Transverse colon (tissue), 4 donors: ENCODE measurements at regions of chr3 and their contacts with region 1.

Region 1: DNA sequence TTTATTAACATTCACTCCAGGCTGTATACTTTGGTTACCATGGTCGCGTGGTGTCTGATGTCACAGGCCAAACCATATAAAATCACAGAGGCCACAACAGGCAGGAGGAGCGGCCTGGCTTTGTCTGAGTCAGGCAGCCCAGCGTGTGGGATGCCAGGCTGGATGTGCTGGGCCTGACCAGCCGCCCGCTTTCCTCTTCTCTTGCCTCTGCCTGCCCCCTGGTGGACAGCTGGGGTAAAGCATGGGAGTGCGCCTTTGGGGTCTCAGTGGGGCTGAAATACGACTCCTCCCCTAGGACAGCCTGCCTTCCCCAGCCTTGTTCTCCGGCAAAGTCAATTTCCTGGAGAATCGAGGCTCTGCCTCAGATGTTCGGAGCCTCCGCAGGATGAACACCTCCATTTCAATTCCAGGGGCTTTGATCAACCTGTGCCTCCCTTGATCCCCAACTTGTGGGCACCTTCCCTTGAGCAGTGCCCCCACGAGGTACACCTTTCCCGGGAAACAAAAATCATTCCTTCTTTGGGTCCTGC is 78.2 kb downstream of the CCNL1 start:
- DNase-seq: peak; percentile 90
- H3K4me3 ChIP-seq: no peak overlapping the region
- H3K27ac ChIP-seq: peak overlapping the region; percentile 29 to 47 (median 41)
- H3K4me1 ChIP-seq: peaks cover 1 to 13% (median 8%) of the 10 kb centered on the region in 4 donors
- H3K27me3 ChIP-seq: no peaks in the 10 kb centered on the region
- CTCF ChIP-seq: peak; percentile 96 to 99 (median 99)
- EP300 ChIP-seq: no peak
- POLR2A ChIP-seq: no peak

Region 2: GRCh38 chr3:156535162-156535627 is 546.6 kb before region 1 on chr3:
- in situ Hi-C with region 1: loop called in 1 of 4 experiments (anchors 10 kb)
- intact Hi-C with region 1: loop called (anchors 10 kb)
- DNase-seq: peak; percentile 51
- H3K4me3 ChIP-seq: no peak overlapping the region
- H3K27ac ChIP-seq: peak overlapping the region; percentile 69 to 76 (median 74)
- H3K4me1 ChIP-seq: peaks cover 8 to 17% (median 15%) of the 10 kb centered on the region in 4 donors
- H3K27me3 ChIP-seq: no peaks in the 10 kb centered on the region
- CTCF ChIP-seq: peak in 1 of 5 experiments; percentile 28
- EP300 ChIP-seq: no peak
- POLR2A ChIP-seq: peak; percentile 10

Region 3: DNA sequence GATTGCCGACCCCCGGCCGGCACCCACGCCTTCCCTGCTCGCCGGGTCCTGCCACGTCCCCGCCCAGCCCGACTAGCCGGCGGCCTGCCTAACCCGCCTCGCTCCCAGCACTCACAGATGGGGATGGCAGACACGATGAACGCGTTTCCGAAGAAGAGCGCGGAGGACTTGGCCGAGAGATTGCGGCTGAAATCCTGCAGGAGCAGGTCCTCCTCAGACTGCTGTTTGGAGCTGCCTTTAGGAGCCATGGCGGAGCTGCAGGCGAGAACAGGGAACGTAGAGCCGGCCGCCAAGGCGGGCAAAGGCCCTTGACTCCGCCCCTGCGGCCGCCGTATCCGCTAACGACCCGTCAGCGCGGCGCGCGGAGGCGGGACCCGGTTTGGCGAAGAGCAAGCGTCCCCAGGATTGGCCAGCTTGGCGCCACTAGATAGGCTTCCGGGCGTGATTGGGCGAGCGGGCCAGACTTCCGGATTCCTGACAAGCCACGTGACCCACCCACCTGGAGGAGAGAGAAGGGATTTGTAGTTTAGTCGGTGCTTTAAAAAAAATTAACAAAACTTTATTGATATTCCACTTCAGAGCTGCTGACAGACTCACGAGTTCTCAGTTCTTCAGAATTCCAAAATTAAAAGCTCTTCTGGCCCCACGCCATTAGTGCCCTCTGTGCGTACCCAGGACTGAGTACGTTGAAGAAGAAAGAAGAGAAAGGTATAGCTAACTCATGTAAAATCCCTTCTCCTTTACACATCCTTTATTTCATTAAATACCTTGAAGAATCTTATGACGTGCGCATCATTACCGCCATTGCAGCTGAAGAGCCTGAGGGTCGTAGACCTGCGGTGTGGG is 526.7 kb before region 1 on chr3 and contains the start of gene SSR3:
- in situ Hi-C with region 1: loop called in 3 of 4 experiments (anchors 10 to 25 kb)
- intact Hi-C with region 1: no loop called
- DNase-seq: peak; percentile 99
- H3K4me3 ChIP-seq: peak within 1 kb of the TSS; percentile 69 to 95 (median 76)
- H3K27ac ChIP-seq: peak within 1 kb of the TSS; percentile 89 to 97 (median 90)
- H3K4me1 ChIP-seq: peaks cover 8 to 43% (median 25%) of the 10 kb centered on the region in 4 donors
- H3K27me3 ChIP-seq: no peaks in the 10 kb centered on the region
- CTCF ChIP-seq: peak; percentile 37 to 92 (median 45)
- EP300 ChIP-seq: no peak
- POLR2A ChIP-seq: peak; percentile 91
- total RNA-seq, gene SSR3: 21.7 to 68.8 (median 50.1) TPM

Region 4: GRCh38 chr3:156681002-156681401 is 400.7 kb before region 1 on chr3:
- in situ Hi-C with region 1: loop called (anchors 5 to 10 kb)
- intact Hi-C with region 1: loop called (anchors 5 kb)
- DNase-seq: peak; percentile 28
- H3K4me3 ChIP-seq: peak overlapping the region in 1 of 4 donors; percentile 4
- H3K27ac ChIP-seq: peak overlapping the region; percentile 16 to 34 (median 26)
- H3K4me1 ChIP-seq: peaks cover 46 to 94% (median 49%) of the 10 kb centered on the region in 4 donors
- H3K27me3 ChIP-seq: no peaks in the 10 kb centered on the region
- CTCF ChIP-seq: no peak
- EP300 ChIP-seq: no peak
- POLR2A ChIP-seq: no peak

Region 5: GRCh38 chr3:156826144-156826895 is 255.4 kb before region 1 on chr3 and contains the start of gene LEKR1:
- in situ Hi-C with region 1: loop called in 2 of 4 experiments (anchors 10 to 25 kb)
- intact Hi-C with region 1: loop called (anchors 10 kb)
- DNase-seq: peak; percentile 92
- H3K4me3 ChIP-seq: peak within 1 kb of the TSS; percentile 55 to 74 (median 56)
- H3K27ac ChIP-seq: peak within 1 kb of the TSS; percentile 90 to 97 (median 92)
- H3K4me1 ChIP-seq: peaks cover 6 to 16% (median 10%) of the 10 kb centered on the region in 4 donors
- H3K27me3 ChIP-seq: no peaks in the 10 kb centered on the region
- CTCF ChIP-seq: peak in 1 of 5 experiments; percentile 12
- EP300 ChIP-seq: no peak
- POLR2A ChIP-seq: peak; percentile 87
- total RNA-seq, gene LEKR1: 0.40 to 3.3 (median 0.96) TPM in 3 of 4 donors, not detected in the other